ENCODE measurements at regions of chrX and their contacts with region 1.

Region 1: DNA sequence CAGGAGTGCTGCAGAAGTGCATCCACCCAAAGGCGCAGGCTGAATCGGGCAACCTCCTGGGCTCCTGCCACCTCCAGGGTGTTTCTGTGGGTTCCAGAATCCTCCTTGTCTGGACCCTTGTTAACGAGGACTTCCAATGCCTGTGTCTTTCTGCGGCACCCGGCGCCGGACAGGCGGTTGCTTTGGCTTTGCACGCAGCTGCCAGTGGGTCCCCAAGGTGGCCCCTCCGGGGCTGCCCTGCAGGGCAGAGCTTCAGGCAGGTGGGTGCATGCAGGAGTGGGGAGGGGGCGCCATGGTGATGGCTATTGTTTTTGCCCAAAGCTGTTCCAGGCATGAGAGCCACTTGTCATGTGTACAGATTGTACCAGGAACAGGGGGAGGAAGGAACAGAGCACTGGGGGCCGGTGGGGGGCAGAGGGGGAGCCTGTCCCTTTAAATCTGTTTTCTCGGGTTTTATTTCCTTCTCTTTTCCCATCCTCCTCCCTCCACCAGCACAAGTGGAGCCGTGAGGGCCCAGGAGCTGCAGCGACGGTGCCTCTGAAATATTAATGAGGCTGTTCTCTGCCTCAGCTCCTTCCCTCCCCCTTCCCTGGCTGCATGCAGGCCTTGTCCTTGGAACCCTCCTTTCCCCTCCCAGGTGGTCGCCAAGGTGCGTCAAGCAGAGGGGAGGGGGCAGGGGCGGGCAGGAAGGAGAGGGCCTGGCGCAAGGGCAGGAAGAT is 13.1 kb downstream of the ATP2B3 start:
- DNase-seq: no peak
- H3K4me3 ChIP-seq: no peak overlapping the region
- H3K27ac ChIP-seq: no peak overlapping the region
- H3K4me1 ChIP-seq: no peaks in the 10 kb centered on the region
- H3K27me3 ChIP-seq: peaks cover 0 to 77% of the 10 kb centered on the region in 2 donors
- CTCF ChIP-seq: no peak
- POLR2A ChIP-seq: no peak

Region 2: DNA sequence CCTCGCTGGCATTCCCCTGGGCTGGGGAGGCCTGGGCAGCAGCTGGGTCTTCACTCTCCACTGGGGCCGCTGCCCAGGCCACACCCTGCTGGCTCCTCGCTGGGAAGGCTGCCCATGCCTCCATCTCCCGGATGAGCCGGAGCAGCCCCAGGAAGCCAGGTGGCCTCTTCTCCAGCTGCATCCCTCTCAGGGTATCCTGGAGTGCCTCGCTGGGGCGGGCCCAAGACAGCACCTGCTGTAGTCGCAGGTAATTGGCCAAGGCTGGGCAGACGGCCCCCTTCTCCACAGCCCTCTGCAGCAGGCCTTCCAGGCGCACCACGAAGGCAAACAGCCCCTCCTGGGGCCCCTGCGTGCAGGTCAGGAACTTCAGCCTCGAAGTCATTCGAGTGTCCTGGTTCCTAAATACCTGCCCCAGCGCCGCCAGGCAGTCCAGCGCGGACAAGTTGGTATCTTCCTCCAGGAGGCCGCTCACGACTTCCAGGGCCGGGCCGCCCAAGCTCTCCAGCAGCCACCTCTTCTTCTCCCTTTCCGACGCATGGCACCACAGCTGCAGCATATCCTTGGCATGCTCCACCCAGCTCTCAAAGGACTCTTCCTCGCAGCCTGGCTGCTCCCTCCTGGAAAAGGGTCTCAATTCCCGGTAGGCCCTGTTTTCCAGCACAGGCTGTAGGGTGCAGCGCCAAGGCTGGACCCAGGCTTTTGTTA is 133.2 kb before region 1 on chrX:
- intact Hi-C with region 1: no loop called
- DNase-seq: no peak
- H3K4me3 ChIP-seq: no peak overlapping the region
- H3K27ac ChIP-seq: no peak overlapping the region
- H3K4me1 ChIP-seq: no peaks in the 10 kb centered on the region
- H3K27me3 ChIP-seq: peaks cover 0 to 58% of the 10 kb centered on the region in 2 donors
- CTCF ChIP-seq: no peak
- POLR2A ChIP-seq: no peak

Region 3: DNA sequence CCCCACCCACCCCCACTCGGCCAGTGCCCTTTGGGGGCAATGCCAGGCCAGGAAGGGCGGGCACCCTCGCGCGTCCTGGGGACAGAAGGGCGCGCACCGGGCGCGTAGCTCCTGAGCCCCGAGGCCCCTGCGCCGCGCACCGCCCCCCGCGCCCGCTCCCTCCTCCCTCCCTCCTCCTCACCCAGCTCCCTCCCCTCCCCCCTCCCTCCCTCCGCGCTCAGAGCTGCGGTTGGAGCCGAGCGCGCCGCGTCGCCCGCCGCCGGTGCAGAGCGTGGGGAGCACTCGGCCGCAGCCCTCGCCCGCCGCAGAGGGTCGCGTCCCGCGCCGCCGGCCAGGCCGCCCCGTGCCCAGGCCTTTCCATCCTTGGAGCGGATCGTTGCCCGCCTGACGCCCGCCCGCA is 13.1 kb before region 1 on chrX and contains the start of gene ATP2B3:
- intact Hi-C with region 1: no loop called
- DNase-seq: no peak
- H3K4me3 ChIP-seq: peak within 1 kb of the TSS in 1 of 3 donors; percentile 28
- H3K27ac ChIP-seq: no peak within 1 kb of the TSS
- H3K4me1 ChIP-seq: no peaks in the 10 kb centered on the region
- H3K27me3 ChIP-seq: peaks cover 0 to 81% of the 10 kb centered on the region in 2 donors
- CTCF ChIP-seq: no peak
- POLR2A ChIP-seq: no peak
- total RNA-seq, gene ATP2B3: not detected

Region 4: GRCh38 chrX:153561342-153561741 is 30.8 kb after region 1 on chrX:
- intact Hi-C with region 1: loop called (anchors 1 kb)
- DNase-seq: no peak
- H3K4me3 ChIP-seq: no peak overlapping the region
- H3K27ac ChIP-seq: no peak overlapping the region
- H3K4me1 ChIP-seq: no peaks in the 10 kb centered on the region
- H3K27me3 ChIP-seq: peaks cover 0 to 61% of the 10 kb centered on the region in 2 donors
- CTCF ChIP-seq: no peak
- POLR2A ChIP-seq: no peak